Activated T-helper 1 cell treated with anti-CD3 and anti-CD28 coated beads, Interleukin-12 subunit alpha, Interleukin-12 subunit beta, Interleukin-2, Interleukin-4 antibody, amounts not matched to agents 30 ng/mL and 10 ng/mL and 1 ng/mL, durations not matched to agents 14 hours and 24 hours and 36 hours (primary cell): ENCODE measurements at regions of chr21 and their contacts with region 1.

Region 1: GRCh38 chr21:31180256-31181081 is 142.2 kb upstream of the KRTAP19-8 start:
- DNase-seq: no peak
- H3K4me3 Mint-ChIP-seq: peak overlapping the region; percentile 92
- H3K27ac Mint-ChIP-seq: peak overlapping the region; percentile 98
- H3K4me1 Mint-ChIP-seq: peaks cover 70% of the 10 kb centered on the region
- H3K27me3 Mint-ChIP-seq: no peaks in the 10 kb centered on the region

Region 2: GRCh38 chr21:30718239-30718909 is 462.1 kb before region 1 on chr21 and contains the start of gene KRTAP21-3:
- intact Hi-C with region 1: loop called (anchors 5 kb)
- DNase-seq: no peak
- H3K4me3 Mint-ChIP-seq: peak within 1 kb of the TSS; percentile 7
- H3K27ac Mint-ChIP-seq: peak within 1 kb of the TSS; percentile 75
- H3K4me1 Mint-ChIP-seq: peaks cover 29% of the 10 kb centered on the region
- H3K27me3 Mint-ChIP-seq: peaks cover 2% of the 10 kb centered on the region
- total RNA-seq, gene KRTAP21-3: not detected in 2 replicates

Region 3: GRCh38 chr21:31107871-31108270 is 72.6 kb before region 1 on chr21:
- intact Hi-C with region 1: loop called (anchors 2 kb)
- DNase-seq: no peak
- H3K4me3 Mint-ChIP-seq: no peak overlapping the region
- H3K27ac Mint-ChIP-seq: peak overlapping the region; percentile 32
- H3K4me1 Mint-ChIP-seq: peaks cover 40% of the 10 kb centered on the region
- H3K27me3 Mint-ChIP-seq: no peaks in the 10 kb centered on the region

Region 4: DNA sequence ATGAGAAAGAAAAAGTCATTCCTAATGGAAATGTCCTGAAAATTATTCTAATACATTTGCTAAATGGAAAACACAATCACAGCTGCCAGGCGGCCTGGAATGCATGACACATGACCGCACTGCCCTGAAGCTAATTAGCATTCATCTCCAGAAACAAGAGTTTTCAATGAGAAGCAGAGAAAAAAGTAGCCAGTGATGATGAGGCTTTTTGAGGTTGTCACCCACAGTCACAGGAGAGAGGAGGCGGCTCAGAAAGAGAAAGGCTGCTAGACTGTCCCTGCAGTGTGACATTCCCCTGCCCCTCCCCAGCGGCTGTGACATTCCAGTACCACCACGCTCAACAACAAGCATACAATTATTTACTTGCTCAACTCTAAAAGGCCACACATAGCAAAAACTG is 19.3 kb before region 1 on chr21:
- intact Hi-C with region 1: loop called (anchors 2 kb)
- DNase-seq: no peak
- H3K4me3 Mint-ChIP-seq: no peak overlapping the region
- H3K27ac Mint-ChIP-seq: no peak overlapping the region
- H3K4me1 Mint-ChIP-seq: peaks cover 66% of the 10 kb centered on the region
- H3K27me3 Mint-ChIP-seq: no peaks in the 10 kb centered on the region

Region 5: GRCh38 chr21:31282095-31282709 is 101.7 kb after region 1 on chr21:
- intact Hi-C with region 1: no loop called
- DNase-seq: no peak
- H3K4me3 Mint-ChIP-seq: no peak overlapping the region
- H3K27ac Mint-ChIP-seq: no peak overlapping the region
- H3K4me1 Mint-ChIP-seq: peaks cover 23% of the 10 kb centered on the region
- H3K27me3 Mint-ChIP-seq: no peaks in the 10 kb centered on the region

Region 6: GRCh38 chr21:31354604-31355443 is 174.4 kb after region 1 on chr21:
- intact Hi-C with region 1: loop called (anchors 1 kb)
- DNase-seq: peak; percentile 85
- H3K4me3 Mint-ChIP-seq: peak overlapping the region; percentile 38
- H3K27ac Mint-ChIP-seq: peak overlapping the region; percentile 77
- H3K4me1 Mint-ChIP-seq: peaks cover 14% of the 10 kb centered on the region
- H3K27me3 Mint-ChIP-seq: peaks cover 2% of the 10 kb centered on the region

Region 7: GRCh38 chr21:31731802-31732596 is 551.5 kb after region 1 on chr21 and contains the start of gene SCAF4:
- intact Hi-C with region 1: loop called (anchors 5 kb)
- DNase-seq: peak; percentile 78
- H3K4me3 Mint-ChIP-seq: no peak within 1 kb of the TSS
- H3K27ac Mint-ChIP-seq: peak within 1 kb of the TSS; percentile 79
- H3K4me1 Mint-ChIP-seq: no peaks in the 10 kb centered on the region
- H3K27me3 Mint-ChIP-seq: no peaks in the 10 kb centered on the region
- total RNA-seq, gene SCAF4: 66.1 and 70.6 TPM in 2 replicates